H1 (cell line): ENCODE measurements at regions of chr10 and their contacts with region 1.

Region 1: DNA sequence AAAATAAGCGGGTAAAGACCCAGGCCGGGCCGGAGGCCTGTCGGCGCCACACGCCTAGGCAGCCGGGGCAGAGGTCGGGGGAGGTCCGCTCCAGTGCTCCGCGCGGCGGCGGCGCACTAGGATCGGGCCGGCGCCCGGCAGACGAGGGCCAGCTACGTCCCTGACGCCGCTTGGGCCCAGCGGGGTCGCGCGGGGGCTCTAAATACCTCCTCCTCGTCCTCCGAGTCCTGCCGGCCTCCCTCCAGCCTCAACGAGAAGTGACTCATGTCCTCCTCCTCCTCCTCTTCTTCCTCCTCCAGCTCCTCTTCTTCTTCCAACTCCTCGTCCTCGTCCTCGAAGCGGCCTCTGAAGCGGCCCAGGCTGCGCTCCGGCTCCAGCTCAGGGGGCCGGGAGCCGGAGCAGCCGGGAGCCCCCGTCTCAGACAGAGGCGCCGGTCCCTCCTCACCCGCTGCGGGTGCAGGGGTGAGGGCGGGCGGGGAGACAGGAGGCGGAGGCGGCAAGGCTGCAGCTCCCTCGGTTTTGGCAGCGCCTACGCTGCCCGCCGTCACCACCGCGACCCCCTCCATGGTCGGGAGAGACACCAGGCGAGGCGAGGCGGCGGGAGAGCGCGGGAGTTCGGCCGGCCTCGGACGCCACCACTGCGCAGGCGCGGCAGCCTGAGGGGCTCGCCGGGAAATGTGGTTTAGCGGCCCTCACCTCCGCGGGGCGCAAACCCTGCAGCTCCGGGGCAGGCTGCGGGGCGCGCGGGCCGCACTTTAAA is at the start of gene PCGF6:
- DNase-seq: peak; percentile 70 to 96
- H3K4me3 ChIP-seq: peak within 1 kb of the TSS; percentile 72 to 83 (median 76)
- H3K27ac ChIP-seq: peak within 1 kb of the TSS; percentile 45; the same call in 1 of the 2 replicates
- H3K4me1 ChIP-seq: peaks cover 0 to 3% (median 1%) of the 10 kb centered on the region in 4 experiments; a peak in 4 of 7 replicates
- H3K27me3 ChIP-seq: no peaks in the 10 kb centered on the region
- CTCF ChIP-seq: no peak
- EP300 ChIP-seq: no peak
- POLR2A ChIP-seq: peak in 1 of 2 experiments; percentile 56; a peak in 2 of 3 replicates
- RAD21 ChIP-seq: no peak
- total RNA-seq, gene PCGF6: 16.2 and 18.6 TPM in 2 replicates

Region 2: GRCh38 chr10:103333925-103334520 is 16.7 kb before region 1 on chr10:
- CTCF ChIA-PET with region 1: interaction called, 12 read pairs
- POLR2A ChIA-PET with region 1: interaction called, 3 read pairs
- DNase-seq: no peak
- H3K4me3 ChIP-seq: no peak overlapping the region
- H3K27ac ChIP-seq: no peak overlapping the region
- H3K4me1 ChIP-seq: no peaks in the 10 kb centered on the region
- H3K27me3 ChIP-seq: no peaks in the 10 kb centered on the region
- CTCF ChIP-seq: peak in 1 of 3 experiments; percentile 26; a peak in 2 of 4 replicates
- EP300 ChIP-seq: no peak
- POLR2A ChIP-seq: no peak
- RAD21 ChIP-seq: no peak; a peak in 2 of 4 replicates

Region 3: GRCh38 chr10:103367782-103368518 is 17.3 kb after region 1 on chr10 and contains the start of gene TAF5:
- CTCF ChIA-PET with region 1: interaction called, 3 read pairs
- POLR2A ChIA-PET with region 1: interaction called, 14 read pairs
- DNase-seq: peak; percentile 77 to 89
- H3K4me3 ChIP-seq: peak within 1 kb of the TSS; percentile 83 to 88 (median 86)
- H3K27ac ChIP-seq: no peak within 1 kb of the TSS; the same call in 1 of the 2 replicates
- H3K4me1 ChIP-seq: no peaks in the 10 kb centered on the region
- H3K27me3 ChIP-seq: no peaks in the 10 kb centered on the region
- CTCF ChIP-seq: no peak
- EP300 ChIP-seq: no peak
- POLR2A ChIP-seq: peak in 1 of 2 experiments; percentile 81; a peak in 2 of 3 replicates
- RAD21 ChIP-seq: no peak
- total RNA-seq, gene TAF5: 14.5 and 15.6 TPM in 2 replicates